ENCODE measurements at regions of chr19 and their contacts with region 1.

Region 1: DNA sequence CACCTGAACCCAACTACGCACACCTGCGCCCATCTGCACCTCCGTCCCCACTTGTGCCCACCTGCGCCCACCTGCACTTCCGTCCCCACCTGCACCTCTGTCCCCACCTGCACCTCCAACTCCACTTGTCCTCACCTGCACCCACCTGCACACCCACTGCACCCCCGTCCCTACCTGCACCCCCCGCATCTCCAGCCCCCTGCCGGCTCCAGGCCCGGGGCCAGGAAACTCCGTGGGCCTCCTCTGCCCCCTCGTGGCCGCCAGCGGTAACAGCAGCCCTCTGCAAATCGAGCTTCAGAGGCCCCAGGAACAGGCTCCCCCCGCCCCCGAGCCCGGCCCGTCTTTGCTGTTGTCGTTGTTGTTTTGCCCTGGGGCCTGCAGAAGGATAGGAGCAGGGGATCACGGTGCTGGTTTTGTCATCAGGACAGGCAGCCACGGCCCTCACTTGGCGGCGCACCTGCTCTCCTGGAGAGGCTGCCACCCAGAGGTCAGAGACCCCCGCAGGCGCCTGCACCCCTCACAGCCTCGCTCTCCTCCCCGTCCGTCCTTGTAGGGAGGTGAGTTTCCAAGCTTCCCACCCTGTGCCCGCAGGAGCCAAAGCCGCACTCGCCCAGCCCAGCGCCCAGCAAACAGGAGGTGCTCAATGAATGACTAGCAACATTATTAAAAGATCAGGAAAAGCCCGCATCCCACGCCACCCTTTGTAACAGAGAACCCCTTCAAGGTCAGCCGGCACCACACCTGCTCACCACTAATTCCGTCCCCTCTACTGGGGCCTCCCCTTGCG is 65.4 kb downstream of the GNG7 start:
- DNase-seq: peak in 1 of 2 donors; percentile 71
- ATAC-seq: peak; percentile 73

Region 2: DNA sequence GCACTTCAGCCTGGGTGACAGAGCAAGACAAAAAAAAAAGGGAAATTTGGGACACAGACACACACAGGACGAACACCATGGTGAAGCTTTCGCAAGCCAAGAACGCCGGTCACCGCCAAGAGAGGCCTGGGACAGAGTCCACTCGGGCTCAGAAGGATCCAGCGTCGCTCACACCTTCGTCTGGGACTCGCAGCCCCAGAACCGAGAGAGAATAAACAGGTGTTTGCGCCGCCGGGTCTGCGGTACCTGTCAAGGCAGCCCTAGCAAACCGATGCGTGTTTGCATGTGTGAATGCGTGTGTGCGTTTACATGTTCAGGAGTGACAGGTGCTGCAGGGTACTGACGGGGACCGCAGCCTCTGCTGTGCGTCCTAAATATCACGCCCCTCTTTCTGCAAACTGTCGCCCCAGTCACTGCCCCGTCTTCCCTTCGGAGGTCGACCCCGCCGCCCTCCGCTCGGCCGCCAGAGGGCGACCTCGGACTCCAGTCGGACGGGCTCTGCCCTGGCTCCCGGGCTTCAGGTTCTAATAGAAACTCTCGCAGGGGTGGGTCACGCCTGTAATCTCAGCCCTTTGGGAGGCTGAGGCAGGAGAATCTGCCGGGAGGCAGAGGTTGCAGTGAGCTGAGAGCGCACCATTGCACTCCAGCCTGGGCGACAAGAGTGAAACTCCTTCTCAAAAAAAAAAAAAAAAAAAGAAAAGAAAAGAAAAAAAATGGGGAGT is 707.9 kb before region 1 on chr19:
- intact Hi-C with region 1: loop called in 1 of 2 experiments (anchors 10 kb)
- DNase-seq: peak; percentile 74 to 88
- ATAC-seq: peak; percentile 90

Measured in left colon (tissue), 2 donors.